HepG2 (cell line): ENCODE measurements at regions of chrX and their contacts with region 1.

Region 1: DNA sequence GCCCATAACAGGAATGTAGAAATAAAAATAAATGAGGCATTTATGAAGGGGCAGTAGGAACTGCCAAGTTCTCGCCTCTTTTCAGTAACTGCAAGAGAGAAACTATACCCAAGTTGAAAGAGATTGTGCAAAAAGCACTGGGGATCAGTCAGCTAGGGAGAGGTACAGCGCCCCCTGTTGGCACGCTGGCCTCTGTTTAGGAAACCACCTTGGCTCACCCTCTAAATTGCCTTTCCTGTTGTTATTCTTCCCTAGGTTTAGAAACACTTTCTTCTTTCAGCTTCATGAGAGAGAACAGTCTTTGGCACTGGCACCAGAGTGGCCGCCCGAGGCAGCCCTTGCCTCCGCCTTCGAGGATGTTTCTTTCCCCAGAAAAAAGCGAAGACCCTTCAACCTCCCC is 348.5 kb downstream of the MID1IP1 start:
- DNase-seq: peak; percentile 3
- ATAC-seq: peak; percentile 64
- H3K4me3 ChIP-seq: no peak overlapping the region
- H3K27ac ChIP-seq: no peak overlapping the region
- H3K4me1 ChIP-seq: peaks cover 8% of the 10 kb centered on the region; the same call in 1 of the 2 replicates
- H3K27me3 ChIP-seq: no peaks in the 10 kb centered on the region
- CTCF ChIP-seq: peak; percentile 68
- EP300 ChIP-seq: no peak
- POLR2A ChIP-seq: no peak
- RAD21 ChIP-seq: 0 out of 2 replicates have a peak, but pooled peaks have one; percentile 25

Region 2: DNA sequence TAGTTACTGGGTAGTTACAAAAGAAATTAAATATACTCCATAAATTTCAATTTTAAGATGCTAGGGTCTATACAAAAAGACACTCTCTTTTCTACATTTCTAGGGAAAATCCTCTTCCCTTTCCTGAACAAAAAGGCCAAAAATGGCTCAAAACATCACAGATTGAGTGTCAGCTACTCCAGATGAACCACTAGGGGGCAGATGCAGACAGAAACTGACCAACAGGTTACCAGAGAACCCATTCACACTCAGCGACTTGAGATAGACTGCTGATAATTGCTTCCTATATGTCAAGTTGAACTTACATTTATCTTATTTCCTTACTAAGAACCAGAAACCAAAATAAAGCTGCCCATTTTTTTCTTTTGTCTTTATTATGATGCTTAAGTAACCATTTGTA is 431.9 kb before region 1 on chrX:
- CTCF ChIA-PET with region 1: no interaction called
- POLR2A ChIA-PET with region 1: no interaction called
- in situ Hi-C with region 1: no loop called
- intact Hi-C with region 1: loop called (anchors 1 kb)
- DNase-seq: peak; percentile 16
- ATAC-seq: peak; percentile 48; the same call in 2 of the 3 replicates
- H3K4me3 ChIP-seq: no peak overlapping the region
- H3K27ac ChIP-seq: no peak overlapping the region
- H3K4me1 ChIP-seq: no peaks in the 10 kb centered on the region
- H3K27me3 ChIP-seq: no peaks in the 10 kb centered on the region
- CTCF ChIP-seq: peak; percentile 48
- EP300 ChIP-seq: no peak
- POLR2A ChIP-seq: no peak
- RAD21 ChIP-seq: no peak

Region 3: DNA sequence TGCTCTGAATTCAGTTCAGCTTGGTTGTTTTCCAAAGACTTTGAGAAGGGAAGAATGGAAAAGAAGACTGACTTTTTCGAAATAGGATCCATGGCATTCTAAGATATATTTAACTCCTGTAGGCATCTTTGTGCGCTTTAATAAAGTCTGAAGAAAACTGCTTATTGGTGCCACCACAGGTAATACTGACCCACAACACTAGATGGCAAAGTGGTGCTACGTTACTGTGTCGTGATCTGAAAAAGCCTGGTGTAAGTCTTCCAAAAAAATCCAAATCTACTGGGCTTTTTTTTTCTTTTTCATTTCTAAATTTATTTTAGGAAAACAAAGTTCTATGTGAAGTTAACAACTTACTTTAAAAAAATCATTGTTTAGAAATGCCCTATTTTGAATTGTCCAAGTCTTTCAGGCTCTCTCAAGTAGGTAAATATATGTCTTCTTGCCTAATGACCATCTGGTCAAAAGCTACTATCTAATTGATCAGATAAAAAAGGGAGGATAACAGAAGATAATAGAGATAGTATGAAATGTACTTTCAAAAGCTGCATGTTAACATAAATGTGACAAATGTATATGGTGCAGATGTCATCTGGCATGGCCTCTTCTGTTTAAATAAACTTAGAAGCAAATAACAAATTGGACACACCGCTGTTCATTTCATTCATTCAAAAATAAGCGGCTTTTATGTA is 395.5 kb before region 1 on chrX:
- CTCF ChIA-PET with region 1: interaction called, 23 read pairs
- POLR2A ChIA-PET with region 1: no interaction called
- in situ Hi-C with region 1: loop called (anchors 10 kb)
- intact Hi-C with region 1: loop called (anchors 1 kb)
- DNase-seq: peak; percentile 19
- ATAC-seq: no peak
- H3K4me3 ChIP-seq: no peak overlapping the region
- H3K27ac ChIP-seq: no peak overlapping the region
- H3K4me1 ChIP-seq: no peaks in the 10 kb centered on the region
- H3K27me3 ChIP-seq: no peaks in the 10 kb centered on the region
- CTCF ChIP-seq: peak; percentile 52
- EP300 ChIP-seq: no peak
- POLR2A ChIP-seq: no peak
- RAD21 ChIP-seq: 0 out of 2 replicates have a peak, but pooled peaks have one; percentile 20

Region 4: GRCh38 chrX:38985375-38985774 is 164.4 kb before region 1 on chrX:
- CTCF ChIA-PET with region 1: no interaction called
- POLR2A ChIA-PET with region 1: no interaction called
- in situ Hi-C with region 1: no loop called
- intact Hi-C with region 1: loop called (anchors 2 kb)
- DNase-seq: no peak
- ATAC-seq: no peak
- H3K4me3 ChIP-seq: no peak overlapping the region
- H3K27ac ChIP-seq: no peak overlapping the region
- H3K4me1 ChIP-seq: peaks cover 56% of the 10 kb centered on the region
- H3K27me3 ChIP-seq: no peaks in the 10 kb centered on the region
- CTCF ChIP-seq: no peak
- EP300 ChIP-seq: no peak
- POLR2A ChIP-seq: no peak
- RAD21 ChIP-seq: no peak

Region 5: GRCh38 chrX:39227371-39227770 is 77.6 kb after region 1 on chrX:
- CTCF ChIA-PET with region 1: no interaction called
- POLR2A ChIA-PET with region 1: no interaction called
- in situ Hi-C with region 1: no loop called
- intact Hi-C with region 1: no loop called
- DNase-seq: no peak
- ATAC-seq: no peak
- H3K4me3 ChIP-seq: no peak overlapping the region
- H3K27ac ChIP-seq: no peak overlapping the region
- H3K4me1 ChIP-seq: no peaks in the 10 kb centered on the region
- H3K27me3 ChIP-seq: no peaks in the 10 kb centered on the region
- CTCF ChIP-seq: no peak
- EP300 ChIP-seq: no peak
- POLR2A ChIP-seq: no peak
- RAD21 ChIP-seq: no peak